Heart left ventricle (tissue), 16 donors: ENCODE measurements at regions of chr2 and their contacts with region 1.

Region 1: GRCh38 chr2:210195101-210195852 is 24.1 kb upstream of the KANSL1L start:
- DNase-seq: no peak
- ATAC-seq: peak in 1 of 4 donors; percentile 52
- H3K4me3 ChIP-seq: peak overlapping the region in 10 of 12 donors; percentile 6 to 49 (median 36)
- H3K27ac ChIP-seq: no peak overlapping the region
- H3K4me1 ChIP-seq: peaks cover 0 to 4% (median 0%) of the 10 kb centered on the region in 12 donors
- H3K27me3 ChIP-seq: no peaks in the 10 kb centered on the region
- CTCF ChIP-seq: peak; percentile 59 to 86 (median 72)
- POLR2A ChIP-seq: no peak

Region 2: DNA sequence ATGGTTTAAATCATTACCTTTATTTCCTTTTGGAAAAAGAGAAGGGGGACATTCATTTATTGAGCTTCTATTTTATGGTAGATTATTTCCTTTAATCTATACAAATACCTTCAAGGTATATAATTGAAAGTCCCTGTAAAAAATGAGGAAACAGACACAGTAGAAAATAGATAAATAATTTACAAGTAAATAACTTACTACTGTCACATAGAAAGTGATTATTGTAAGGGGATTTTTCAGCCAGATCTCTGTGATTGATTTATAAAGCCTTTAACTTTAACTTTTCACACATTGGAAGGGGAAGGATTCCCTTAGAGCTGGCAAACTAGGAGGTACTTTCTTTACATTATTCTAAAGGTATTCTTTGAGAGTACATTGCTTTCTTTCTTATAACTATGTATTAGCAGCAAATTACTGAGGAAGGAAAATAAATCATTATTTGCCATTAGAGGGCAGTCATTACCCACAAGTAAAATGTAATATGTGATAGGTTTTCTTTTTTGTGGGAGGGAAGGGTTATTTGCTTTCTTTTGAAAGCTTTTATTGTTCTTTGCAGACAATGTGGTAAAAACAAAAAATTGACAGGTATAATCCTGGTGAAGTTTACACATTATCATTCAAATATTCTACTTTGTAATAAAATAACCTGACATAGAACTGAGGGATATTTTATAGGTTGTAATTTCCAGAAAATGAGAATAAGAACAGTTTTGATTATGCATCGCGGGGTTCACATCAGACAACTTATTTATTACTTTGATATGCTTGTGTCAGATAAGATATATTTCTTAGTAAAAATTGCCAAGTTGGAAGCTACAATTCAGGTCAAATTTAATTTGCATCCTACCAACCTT is 217.7 kb before region 1 on chr2:
- intact Hi-C with region 1: loop called (anchors 1 to 2 kb)
- DNase-seq: no peak
- ATAC-seq: no peak
- H3K4me3 ChIP-seq: no peak overlapping the region
- H3K27ac ChIP-seq: no peak overlapping the region
- H3K4me1 ChIP-seq: no peaks in the 10 kb centered on the region
- H3K27me3 ChIP-seq: peaks cover 0 to 2% (median 0%) of the 10 kb centered on the region in 9 donors
- CTCF ChIP-seq: peak; percentile 51 to 79 (median 65)
- POLR2A ChIP-seq: no peak